Right ventricle myocardium superior (tissue), 1 donor: ENCODE measurements at regions of chr3 and their contacts with region 1.

Region 1: GRCh38 chr3:148943506-148944205 is 47.7 kb upstream of the GYG1 start:
- DNase-seq: no peak
- ATAC-seq: peak; percentile 89

Region 2: DNA sequence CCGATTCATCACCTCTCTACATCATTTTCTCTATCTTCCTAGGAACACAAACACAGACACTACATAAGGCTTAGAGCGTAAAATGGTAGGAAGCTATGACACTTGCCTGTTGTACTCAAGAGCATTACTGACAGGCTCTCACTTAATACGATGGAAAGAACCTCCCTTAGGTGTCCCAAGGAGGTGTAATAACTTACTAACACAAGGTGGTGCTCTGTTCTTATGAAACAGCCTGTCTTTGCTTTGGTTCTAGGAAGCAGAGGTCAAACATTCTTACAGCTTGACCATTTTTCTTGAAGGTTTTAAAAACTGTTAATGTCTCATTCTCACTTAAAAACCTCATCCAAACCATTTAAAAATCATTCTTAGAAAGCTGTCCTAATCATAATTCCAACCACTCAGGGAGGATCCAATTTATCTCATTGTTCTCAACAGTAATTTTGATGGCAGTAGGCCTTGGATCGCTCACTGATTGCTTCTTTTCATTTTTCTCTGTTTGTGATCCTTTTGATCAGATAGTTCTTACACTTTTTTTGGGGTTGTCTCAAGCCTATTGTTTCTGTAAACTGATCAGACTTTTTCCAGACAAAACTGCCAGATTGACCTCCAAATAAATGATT is 563.8 kb before region 1 on chr3:
- intact Hi-C with region 1: loop called (anchors 10 kb)
- DNase-seq: no peak
- ATAC-seq: peak; percentile 65

Region 3: DNA sequence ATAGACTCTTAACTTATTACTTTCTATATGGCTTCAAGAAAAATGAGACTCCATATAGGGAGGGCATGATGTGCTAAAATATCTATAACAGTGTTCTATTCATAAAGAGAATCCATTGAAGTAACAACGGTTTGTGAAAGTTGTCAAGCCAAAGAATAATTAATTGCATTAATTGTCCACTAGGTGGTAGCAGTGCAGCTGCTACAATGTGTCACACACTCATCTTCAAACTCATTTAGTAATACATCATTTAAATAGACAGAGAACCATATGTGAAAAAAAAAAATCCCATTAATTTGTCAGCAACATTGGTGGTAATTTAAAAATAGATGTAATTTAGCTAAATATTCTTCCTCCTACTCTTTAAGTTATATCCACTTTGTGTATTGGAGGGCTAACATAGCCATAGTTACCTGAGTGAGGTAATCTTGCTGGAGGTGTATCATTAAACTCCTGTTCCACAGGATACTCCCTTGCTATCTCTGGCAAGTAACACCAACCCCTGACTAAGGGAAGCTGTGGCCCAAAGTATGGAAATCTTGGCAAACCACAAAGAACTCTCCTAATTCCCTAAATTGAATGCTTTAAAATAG is 82.3 kb before region 1 on chr3:
- intact Hi-C with region 1: loop called (anchors 5 kb)
- DNase-seq: no peak
- ATAC-seq: peak; percentile 51